ENCODE measurements at regions of chr6 and their contacts with region 1.

Region 1: DNA sequence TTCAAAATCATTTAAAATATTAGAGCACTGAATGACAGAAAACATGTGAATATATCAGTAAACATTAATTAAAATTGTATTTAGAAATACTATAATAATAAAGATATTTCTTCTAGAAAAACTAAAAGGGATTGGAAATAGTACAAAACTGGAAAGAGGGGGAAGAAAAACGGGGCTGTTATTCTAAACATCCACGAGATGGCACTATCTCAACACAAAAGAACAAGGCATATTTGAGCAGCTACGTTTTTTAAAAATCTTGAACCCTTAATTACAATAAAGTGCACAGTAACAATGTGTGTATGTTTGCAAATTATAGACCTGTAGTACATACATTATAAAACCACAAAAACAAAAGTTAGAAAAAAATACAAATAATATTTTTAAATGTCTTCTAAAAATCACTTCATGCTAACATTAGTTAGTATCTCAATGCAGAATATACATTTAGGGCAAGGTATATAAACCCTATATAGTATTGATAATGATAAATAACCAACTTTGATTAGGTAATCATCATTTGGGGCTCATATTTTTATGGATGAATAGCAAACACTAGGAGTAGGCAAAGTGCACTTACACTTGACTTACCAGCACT is 42.5 kb upstream of the PNISR start:
- DNase-seq: peak in 4 of 5 donors; percentile 23 to 41 (median 38)
- H3K4me3 ChIP-seq: no peak overlapping the region
- H3K4me3 Mint-ChIP-seq: no peak overlapping the region
- H3K27ac ChIP-seq: no peak overlapping the region
- H3K27ac Mint-ChIP-seq: no peak overlapping the region
- H3K4me1 ChIP-seq: no peaks in the 10 kb centered on the region
- H3K4me1 Mint-ChIP-seq: no peaks in the 10 kb centered on the region
- H3K27me3 ChIP-seq: no peaks in the 10 kb centered on the region
- H3K27me3 Mint-ChIP-seq: no peaks in the 10 kb centered on the region

Region 2: DNA sequence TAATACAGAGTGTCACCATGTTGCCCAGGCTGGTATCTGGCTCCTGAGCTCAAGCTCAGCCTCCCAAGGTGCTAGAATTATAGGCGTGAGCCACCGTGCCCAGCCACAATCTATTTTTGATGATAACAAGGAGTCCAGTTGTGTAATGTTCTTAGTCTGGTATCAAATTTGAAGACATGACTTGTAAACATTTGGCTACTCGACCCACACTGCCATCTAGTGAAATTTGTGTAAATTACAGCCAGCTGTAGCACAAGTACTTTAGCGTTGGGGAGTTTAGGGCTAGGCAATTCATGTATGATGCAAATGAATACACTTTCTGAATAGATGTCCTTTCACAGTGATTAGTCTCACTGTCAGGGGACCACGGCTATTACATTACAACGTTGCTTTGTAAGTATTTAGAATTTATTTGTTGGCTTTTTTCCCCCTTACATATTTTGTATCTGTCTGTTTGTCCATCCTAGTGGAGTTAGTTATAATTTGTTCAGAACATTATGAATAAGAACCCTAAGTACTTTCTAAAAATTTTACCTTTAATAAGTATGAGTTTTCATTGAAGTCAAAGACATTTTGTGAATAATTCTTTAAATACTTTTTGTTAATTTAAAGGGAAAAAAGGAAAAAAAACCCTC is 278.8 kb after region 1 on chr6:
- CTCF ChIA-PET with region 1: interaction called, 93 read pairs
- POLR2A ChIA-PET with region 1: interaction called, 3 read pairs
- intact Hi-C with region 1: loop called (anchors 1 kb)
- DNase-seq: peak; percentile 57 to 64 (median 62)
- H3K4me3 ChIP-seq: no peak overlapping the region
- H3K4me3 Mint-ChIP-seq: no peak overlapping the region
- H3K27ac ChIP-seq: no peak overlapping the region
- H3K27ac Mint-ChIP-seq: no peak overlapping the region
- H3K4me1 ChIP-seq: no peaks in the 10 kb centered on the region
- H3K4me1 Mint-ChIP-seq: no peaks in the 10 kb centered on the region
- H3K27me3 ChIP-seq: peaks cover 3% of the 10 kb centered on the region
- H3K27me3 Mint-ChIP-seq: peaks cover 5 to 20% of the 10 kb centered on the region in 2 donors

Region 3: GRCh38 chr6:99779631-99780555 is 312.3 kb after region 1 on chr6:
- CTCF ChIA-PET with region 1: no interaction called
- POLR2A ChIA-PET with region 1: no interaction called
- intact Hi-C with region 1: no loop called
- DNase-seq: no peak
- H3K4me3 ChIP-seq: no peak overlapping the region
- H3K4me3 Mint-ChIP-seq: no peak overlapping the region
- H3K27ac ChIP-seq: no peak overlapping the region
- H3K27ac Mint-ChIP-seq: no peak overlapping the region
- H3K4me1 ChIP-seq: no peaks in the 10 kb centered on the region
- H3K4me1 Mint-ChIP-seq: no peaks in the 10 kb centered on the region
- H3K27me3 ChIP-seq: no peaks in the 10 kb centered on the region
- H3K27me3 Mint-ChIP-seq: peaks cover 27 to 30% of the 10 kb centered on the region in 2 donors

Region 4: GRCh38 chr6:99905209-99906106 is 437.9 kb after region 1 on chr6:
- CTCF ChIA-PET with region 1: interaction called, 3 read pairs
- POLR2A ChIA-PET with region 1: no interaction called
- intact Hi-C with region 1: loop called (anchors 1 kb)
- DNase-seq: peak in 3 of 5 donors; percentile 5 to 14 (median 10)
- H3K4me3 ChIP-seq: no peak overlapping the region
- H3K4me3 Mint-ChIP-seq: no peak overlapping the region
- H3K27ac ChIP-seq: no peak overlapping the region
- H3K27ac Mint-ChIP-seq: no peak overlapping the region
- H3K4me1 ChIP-seq: no peaks in the 10 kb centered on the region
- H3K4me1 Mint-ChIP-seq: no peaks in the 10 kb centered on the region
- H3K27me3 ChIP-seq: no peaks in the 10 kb centered on the region
- H3K27me3 Mint-ChIP-seq: peaks cover 2 to 6% of the 10 kb centered on the region in 2 donors

Measured in CD4-positive, alpha-beta memory T cell (primary cell).